GM12878 (cell line): ENCODE measurements at regions of chr16 and their contacts with region 1.

Region 1: GRCh38 chr16:88045820-88046303 is 94.6 kb downstream of the BANP start:
- DNase-seq: peak; percentile 86
- ATAC-seq: peak; percentile 87
- H3K4me3 ChIP-seq: no peak overlapping the region
- H3K27ac ChIP-seq: peak overlapping the region; percentile 58
- H3K4me1 ChIP-seq: peaks cover 23% of the 10 kb centered on the region
- H3K27me3 ChIP-seq: no peaks in the 10 kb centered on the region
- CTCF ChIP-seq: no peak
- EP300 ChIP-seq: peak; percentile 90 to 99; a peak in 3 of 4 replicates
- POLR2A ChIP-seq: no peak
- RAD21 ChIP-seq: no peak

Region 2: DNA sequence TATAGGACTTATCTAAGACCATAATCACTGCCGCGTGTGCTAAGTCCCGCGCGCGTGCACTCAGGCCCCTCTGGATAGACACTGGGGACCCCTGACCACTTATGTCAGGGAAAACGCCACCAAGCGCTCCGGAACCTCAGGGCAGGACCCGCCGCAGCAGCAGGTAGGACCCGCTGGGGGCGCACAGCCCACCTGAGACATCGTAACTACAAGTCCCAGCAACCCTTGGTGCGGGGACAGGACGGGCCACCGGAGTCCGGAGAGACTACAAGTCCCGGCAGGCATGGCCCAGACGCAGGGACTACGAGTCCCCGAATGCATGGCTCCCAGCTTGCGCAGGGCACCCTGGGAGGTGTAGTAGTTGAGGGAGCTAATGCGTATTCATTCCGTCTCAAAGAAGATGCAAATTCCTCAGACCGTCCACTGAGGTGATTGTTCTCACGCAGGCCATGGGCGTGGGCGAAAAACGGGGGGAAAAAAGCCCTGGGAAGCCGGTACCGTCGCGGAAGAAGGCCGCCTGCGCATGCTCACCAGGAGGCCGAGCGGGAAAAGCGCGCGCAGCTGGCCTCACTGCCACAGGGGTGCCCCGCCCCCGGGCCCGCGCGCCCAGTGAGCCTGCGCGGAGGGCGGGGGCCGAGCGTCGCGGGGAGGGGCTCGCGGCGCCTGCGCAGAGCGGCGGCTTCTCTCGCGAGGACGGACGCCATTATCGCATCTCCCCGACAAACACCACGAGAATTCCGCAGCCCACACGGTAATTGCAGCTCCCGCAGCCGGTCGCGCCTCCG is 94.9 kb before region 1 on chr16 and contains the start of gene BANP:
- CTCF ChIA-PET with region 1: interaction called, 3 read pairs
- POLR2A ChIA-PET with region 1: no interaction called
- RAD21 ChIA-PET with region 1: no interaction called
- SMC1A ChIA-PET with region 1: no interaction called
- in situ Hi-C with region 1: no loop called
- intact Hi-C with region 1: loop called (anchors 10 kb)
- DNase-seq: peak; percentile 97
- ATAC-seq: peak; percentile 97
- H3K4me3 ChIP-seq: peak within 1 kb of the TSS; percentile 91
- H3K27ac ChIP-seq: peak within 1 kb of the TSS; percentile 98
- H3K4me1 ChIP-seq: peaks cover 14% of the 10 kb centered on the region
- H3K27me3 ChIP-seq: no peaks in the 10 kb centered on the region
- CTCF ChIP-seq: peak; percentile 46 to 76 (median 52)
- EP300 ChIP-seq: no peak
- POLR2A ChIP-seq: peak; percentile 62; the same call in 1 of the 2 replicates
- RAD21 ChIP-seq: no peak
- polyA plus RNA-seq, gene BANP: 3.9 to 7.3 TPM

Region 3: DNA sequence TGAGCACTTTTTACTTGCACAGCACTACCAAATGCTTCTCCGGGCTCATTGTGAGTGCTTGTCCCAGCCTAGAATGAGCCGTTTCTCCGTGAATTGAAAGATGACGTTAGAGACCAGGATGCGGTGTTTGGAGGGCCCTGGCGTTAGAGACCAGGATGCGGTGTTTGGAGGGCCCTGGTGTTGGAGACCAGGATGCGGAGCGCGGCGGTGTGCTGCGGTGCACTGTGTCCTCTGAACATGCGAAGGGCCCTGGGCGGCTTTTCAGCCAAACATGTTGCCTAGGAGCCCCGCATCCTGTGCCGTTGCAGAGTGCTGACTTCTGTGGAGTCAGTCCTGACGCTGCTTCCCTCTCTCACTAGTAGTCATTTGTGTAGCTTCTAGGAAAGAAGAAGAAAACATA is 52.0 kb before region 1 on chr16:
- CTCF ChIA-PET with region 1: no interaction called
- POLR2A ChIA-PET with region 1: no interaction called
- RAD21 ChIA-PET with region 1: no interaction called
- SMC1A ChIA-PET with region 1: no interaction called
- in situ Hi-C with region 1: no loop called
- intact Hi-C with region 1: no loop called
- DNase-seq: no peak
- ATAC-seq: no peak
- H3K4me3 ChIP-seq: no peak overlapping the region
- H3K27ac ChIP-seq: no peak overlapping the region
- H3K4me1 ChIP-seq: no peaks in the 10 kb centered on the region
- H3K27me3 ChIP-seq: no peaks in the 10 kb centered on the region
- CTCF ChIP-seq: no peak
- EP300 ChIP-seq: no peak
- POLR2A ChIP-seq: no peak
- RAD21 ChIP-seq: no peak